Left cardiac atrium (tissue), 4 donors: ENCODE measurements at regions of chr15 and their contacts with region 1.

Region 1: GRCh38 chr15:99068186-99068585 is 36.7 kb upstream of the SYNM start:
- DNase-seq: no peak
- ATAC-seq: no peak

Region 2: GRCh38 chr15:98873441-98874201 is 194.6 kb before region 1 on chr15:
- intact Hi-C with region 1: loop called in 1 of 2 experiments (anchors 10 kb)
- DNase-seq: no peak
- ATAC-seq: peak in 1 of 2 donors; percentile 72